Heart left ventricle (tissue), 16 donors: ENCODE measurements at regions of chr11 and their contacts with region 1.

Region 1: GRCh38 chr11:16365581-16366228 is 9.4 kb upstream of the SOX6 start:
- DNase-seq: no peak
- ATAC-seq: peak; percentile 44 to 61 (median 48)
- H3K4me3 ChIP-seq: no peak overlapping the region
- H3K27ac ChIP-seq: peak overlapping the region in 2 of 12 donors; percentile 17 to 28
- H3K4me1 ChIP-seq: peaks cover 0 to 34% (median 16%) of the 10 kb centered on the region in 12 donors
- H3K27me3 ChIP-seq: no peaks in the 10 kb centered on the region
- CTCF ChIP-seq: no peak
- POLR2A ChIP-seq: no peak

Region 2: GRCh38 chr11:16293204-16293681 is 72.5 kb before region 1 on chr11:
- intact Hi-C with region 1: no loop called
- DNase-seq: no peak
- ATAC-seq: peak; percentile 86 to 94 (median 89)
- H3K4me3 ChIP-seq: no peak overlapping the region
- H3K27ac ChIP-seq: peak overlapping the region; percentile 37 to 87 (median 66)
- H3K4me1 ChIP-seq: peaks cover 0 to 34% (median 12%) of the 10 kb centered on the region in 12 donors
- H3K27me3 ChIP-seq: no peaks in the 10 kb centered on the region
- CTCF ChIP-seq: no peak
- POLR2A ChIP-seq: no peak

Region 3: GRCh38 chr11:16321148-16321547 is 44.6 kb before region 1 on chr11:
- intact Hi-C with region 1: no loop called
- DNase-seq: no peak
- ATAC-seq: no peak
- H3K4me3 ChIP-seq: no peak overlapping the region
- H3K27ac ChIP-seq: no peak overlapping the region
- H3K4me1 ChIP-seq: no peaks in the 10 kb centered on the region
- H3K27me3 ChIP-seq: no peaks in the 10 kb centered on the region
- CTCF ChIP-seq: no peak
- POLR2A ChIP-seq: no peak

Region 4: GRCh38 chr11:16596231-16596630 is 230.5 kb after region 1 on chr11:
- intact Hi-C with region 1: loop called in 3 of 10 experiments (anchors 5 to 10 kb)
- DNase-seq: no peak
- ATAC-seq: no peak
- H3K4me3 ChIP-seq: no peak overlapping the region
- H3K27ac ChIP-seq: no peak overlapping the region
- H3K4me1 ChIP-seq: peaks cover 0 to 36% (median 10%) of the 10 kb centered on the region in 12 donors
- H3K27me3 ChIP-seq: peaks cover 0 to 4% (median 0%) of the 10 kb centered on the region in 9 donors
- CTCF ChIP-seq: no peak
- POLR2A ChIP-seq: no peak